ENCODE measurements at regions of chr10 and their contacts with region 1.

Region 1: GRCh38 chr10:21495752-21496342 is 29.6 kb downstream of the SKIDA1 start:
- DNase-seq: peak; percentile 88
- H3K4me3 ChIP-seq: peak overlapping the region; percentile 79 to 94 (median 86)
- H3K27ac ChIP-seq: peak overlapping the region; percentile 49
- H3K4me1 ChIP-seq: peaks cover 12% of the 10 kb centered on the region
- H3K27me3 ChIP-seq: peaks cover 9 to 29% of the 10 kb centered on the region in 2 experiments
- CTCF ChIP-seq: peak; percentile 88 to 95
- POLR2A ChIP-seq: peak; percentile 64

Region 2: DNA sequence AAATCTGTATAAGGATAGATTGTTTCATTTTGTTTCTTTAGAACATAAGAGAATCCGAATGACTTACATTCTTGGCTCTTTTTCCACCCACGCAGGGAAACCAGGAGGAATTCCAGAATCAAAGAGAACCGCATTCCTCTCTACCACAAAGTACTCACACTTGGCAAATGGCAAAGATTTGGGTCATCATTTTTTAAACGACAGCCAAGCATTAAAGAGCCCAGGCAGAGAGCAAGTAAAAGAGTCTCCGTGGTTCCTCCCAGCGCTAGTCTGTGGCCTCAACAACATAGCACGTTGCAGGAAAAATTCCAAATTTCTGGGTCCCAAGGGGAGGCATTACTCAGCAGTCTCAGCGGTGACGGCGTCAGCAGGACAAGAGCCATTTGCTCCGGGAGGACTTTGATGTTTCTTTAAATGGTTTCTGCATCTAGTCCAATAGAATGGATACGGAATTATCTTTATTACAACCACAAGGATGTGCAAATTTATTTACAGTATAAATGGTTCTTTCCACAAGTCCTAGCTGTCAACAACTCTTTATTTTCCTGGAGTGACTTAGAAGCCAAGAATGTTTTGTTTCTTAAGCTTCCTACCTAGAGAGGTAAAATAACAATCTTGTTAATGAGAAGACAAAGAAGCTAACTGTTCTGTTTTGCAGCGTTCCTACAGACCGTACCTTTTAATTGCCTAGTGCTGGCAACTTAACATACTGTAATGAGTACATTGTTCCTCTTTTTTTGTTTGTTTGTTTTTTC is 202.9 kb before region 1 on chr10:
- CTCF ChIA-PET with region 1: interaction called, 3 read pairs
- POLR2A ChIA-PET with region 1: no interaction called
- dilution Hi-C with region 1: no loop called
- intact Hi-C with region 1: loop called (anchors 5 kb)
- DNase-seq: peak; percentile 82
- H3K4me3 ChIP-seq: peak overlapping the region; percentile 2 to 57 (median 32)
- H3K27ac ChIP-seq: peak overlapping the region; percentile 83
- H3K4me1 ChIP-seq: peaks cover 19% of the 10 kb centered on the region
- H3K27me3 ChIP-seq: no peaks in the 10 kb centered on the region
- CTCF ChIP-seq: no peak
- POLR2A ChIP-seq: no peak

Region 3: DNA sequence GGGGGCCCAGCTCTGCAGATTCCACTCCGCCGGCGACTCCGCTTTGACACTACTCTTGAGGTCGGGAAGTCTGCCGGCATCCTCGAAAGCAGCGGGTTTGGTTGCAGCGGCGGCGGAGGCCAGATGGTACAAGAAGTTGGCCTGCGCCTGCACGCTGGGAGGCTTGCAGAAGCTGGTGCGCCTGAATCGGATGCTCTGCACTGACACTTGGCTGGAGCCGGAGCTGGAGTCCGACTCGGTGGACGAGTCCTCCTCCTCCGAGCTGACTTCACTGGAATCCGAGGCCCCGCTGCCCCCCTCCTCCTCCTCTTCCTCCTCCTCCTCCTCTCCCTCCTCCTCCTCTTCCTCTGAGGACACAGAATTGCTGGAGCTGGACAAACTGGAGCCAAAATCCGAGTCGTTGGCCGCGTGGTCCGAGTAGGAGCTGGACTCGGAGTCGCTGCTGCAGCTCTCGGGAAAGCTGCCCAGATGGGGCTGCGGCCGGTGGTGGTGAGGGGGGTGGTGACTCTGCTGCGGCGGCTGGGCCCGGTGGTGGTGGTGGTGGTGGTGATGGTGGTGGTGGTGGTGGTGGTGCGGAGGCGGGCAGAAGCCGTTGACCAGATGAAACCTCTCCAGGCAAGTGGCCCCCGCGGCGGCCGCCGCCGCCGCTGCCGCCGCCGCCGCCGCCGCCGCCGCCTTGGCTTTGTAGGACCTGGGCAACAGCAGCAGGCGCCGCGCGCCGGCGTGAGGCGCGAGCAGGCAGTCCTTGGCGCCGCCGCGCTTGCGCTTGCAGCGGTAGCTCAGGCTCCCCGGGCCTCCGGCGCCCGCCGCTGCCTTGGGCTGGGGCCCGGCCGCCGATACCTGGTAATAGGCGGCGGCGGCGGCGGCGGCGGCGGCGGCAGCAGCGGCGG is 20.6 kb after region 1 on chr10:
- CTCF ChIA-PET with region 1: interaction called, 29 read pairs
- POLR2A ChIA-PET with region 1: interaction called, 7 read pairs
- dilution Hi-C with region 1: no loop called
- intact Hi-C with region 1: no loop called
- DNase-seq: peak; percentile 53
- H3K4me3 ChIP-seq: peak overlapping the region; percentile 31 to 63 (median 40)
- H3K27ac ChIP-seq: no peak overlapping the region
- H3K4me1 ChIP-seq: peaks cover 26% of the 10 kb centered on the region
- H3K27me3 ChIP-seq: no peaks in the 10 kb centered on the region
- CTCF ChIP-seq: no peak
- POLR2A ChIP-seq: no peak

Region 4: GRCh38 chr10:21724695-21725367 is 229.0 kb after region 1 on chr10:
- CTCF ChIA-PET with region 1: interaction called, 10 read pairs
- POLR2A ChIA-PET with region 1: no interaction called
- dilution Hi-C with region 1: no loop called
- intact Hi-C with region 1: no loop called
- DNase-seq: peak; percentile 97
- H3K4me3 ChIP-seq: no peak overlapping the region
- H3K27ac ChIP-seq: no peak overlapping the region
- H3K4me1 ChIP-seq: peaks cover 34% of the 10 kb centered on the region
- H3K27me3 ChIP-seq: no peaks in the 10 kb centered on the region
- CTCF ChIP-seq: no peak
- POLR2A ChIP-seq: no peak

Region 5: DNA sequence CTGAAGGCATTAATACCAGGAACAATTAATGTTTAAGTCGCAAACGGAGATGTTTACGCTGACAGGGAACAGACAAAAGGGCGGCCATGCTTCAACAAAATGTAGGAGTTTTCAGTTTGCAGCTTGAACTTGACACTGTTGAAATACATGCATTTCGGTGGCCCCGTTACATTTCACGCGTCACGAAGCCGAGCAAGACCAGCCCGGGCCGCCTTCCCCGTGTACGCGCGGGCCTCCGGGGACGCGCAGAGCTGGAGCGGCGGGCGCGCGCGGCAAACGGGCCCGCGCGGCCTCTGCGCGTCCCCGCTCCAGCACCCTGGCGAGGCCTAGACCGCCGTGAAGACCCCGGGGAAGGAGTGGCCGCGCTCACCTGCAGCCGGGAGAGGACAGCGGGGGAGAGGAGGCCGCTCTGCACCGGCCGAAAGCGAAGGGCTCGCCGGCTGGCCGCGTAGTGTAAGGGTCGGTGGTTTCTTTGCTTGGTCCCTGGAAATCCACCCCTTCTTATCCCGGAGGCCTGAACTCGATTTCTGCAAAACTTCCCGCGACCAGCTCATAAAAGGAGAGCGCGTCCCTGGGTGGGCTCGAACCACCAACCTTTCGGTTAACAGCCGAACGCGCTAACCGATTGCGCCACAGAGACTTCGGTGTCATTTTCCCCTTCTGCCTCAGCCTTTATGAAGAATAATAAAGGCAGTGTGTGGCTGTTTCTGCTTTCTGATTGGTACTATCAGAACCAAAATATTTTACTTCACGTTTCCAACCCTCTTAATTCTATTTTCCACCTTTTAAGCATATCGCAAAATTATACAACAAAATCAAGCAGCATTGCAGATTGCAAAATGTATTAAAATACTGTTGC is 733.3 kb after region 1 on chr10:
- CTCF ChIA-PET with region 1: interaction called, 5 read pairs
- POLR2A ChIA-PET with region 1: no interaction called
- dilution Hi-C with region 1: no loop called
- intact Hi-C with region 1: loop called (anchors 5 kb)
- DNase-seq: peak; percentile 94
- H3K4me3 ChIP-seq: peak overlapping the region; percentile 69 to 97 (median 96)
- H3K27ac ChIP-seq: peak overlapping the region; percentile 49
- H3K4me1 ChIP-seq: peaks cover 9% of the 10 kb centered on the region
- H3K27me3 ChIP-seq: no peaks in the 10 kb centered on the region
- CTCF ChIP-seq: no peak
- POLR2A ChIP-seq: peak; percentile 30

Region 6: DNA sequence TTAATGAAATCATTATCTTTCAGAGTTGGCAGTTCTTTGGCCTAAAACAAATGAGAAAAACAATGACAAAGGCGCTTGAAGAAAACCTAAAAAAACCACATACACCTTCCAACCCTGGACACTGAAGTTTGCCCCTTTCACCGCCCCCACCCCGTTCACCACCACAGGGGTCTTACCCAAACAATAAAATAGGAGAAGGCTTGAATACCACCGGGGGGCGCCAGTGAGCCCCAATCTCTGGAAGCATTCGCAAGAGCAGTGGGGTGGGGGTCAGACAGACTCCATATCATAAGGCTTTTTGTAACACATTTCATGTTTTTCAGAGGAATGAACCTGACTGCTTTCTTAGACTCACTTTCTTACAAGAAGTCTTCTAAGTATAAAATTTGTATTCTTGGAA is 1054.9 kb after region 1 on chr10:
- CTCF ChIA-PET with region 1: no interaction called
- POLR2A ChIA-PET with region 1: no interaction called
- dilution Hi-C with region 1: no loop called
- intact Hi-C with region 1: loop called (anchors 10 kb)
- DNase-seq: peak; percentile 44
- H3K4me3 ChIP-seq: no peak overlapping the region
- H3K27ac ChIP-seq: no peak overlapping the region
- H3K4me1 ChIP-seq: no peaks in the 10 kb centered on the region
- H3K27me3 ChIP-seq: no peaks in the 10 kb centered on the region
- CTCF ChIP-seq: peak; percentile 60 to 61
- POLR2A ChIP-seq: no peak